Activated CD8-positive, alpha-beta memory T cell treated with anti-CD3 and anti-CD28 coated beads, Interleukin-2, amount 10 ng/mL, durations not matched to agents 7 days and 5 days (primary cell): ENCODE measurements at regions of chr12 and their contacts with region 1.

Region 1: DNA sequence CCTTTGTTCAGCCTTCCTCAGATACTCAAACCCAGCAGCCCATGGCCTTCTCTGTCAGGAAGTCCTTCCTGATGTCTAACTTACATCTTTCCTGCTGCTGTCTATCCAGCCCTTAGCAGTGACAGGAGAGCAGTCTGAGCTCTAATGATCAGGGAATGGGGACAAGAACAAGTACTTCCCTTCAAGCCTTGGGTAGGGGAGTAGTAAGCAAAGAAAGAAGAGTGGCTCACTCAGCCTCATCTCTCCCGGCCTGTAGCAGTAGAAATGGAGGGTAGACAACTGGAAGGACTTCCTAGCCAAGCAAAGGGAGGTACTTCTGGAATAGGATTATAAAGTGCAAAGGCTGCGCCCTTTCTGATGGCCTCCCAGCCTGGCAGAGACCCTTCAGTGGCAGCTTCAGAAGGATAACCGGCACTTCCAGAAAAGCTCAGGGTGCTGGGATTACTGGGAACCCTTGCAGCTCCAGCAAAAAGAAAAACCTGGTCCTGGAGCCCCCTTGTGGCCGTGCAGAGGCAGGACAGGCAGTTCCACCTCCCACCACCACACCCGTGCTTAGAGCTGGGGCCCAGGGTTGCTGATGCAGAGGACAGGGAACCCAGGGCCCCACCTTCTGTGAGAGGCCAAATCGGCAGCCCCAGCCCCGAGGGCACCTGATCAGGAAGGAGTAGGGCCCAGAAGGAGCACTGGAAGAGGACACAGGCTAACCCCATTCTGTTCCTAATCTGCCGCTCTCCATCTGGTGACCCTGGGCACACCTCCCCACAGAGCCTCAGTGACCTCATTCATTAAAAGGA is 12.4 kb upstream of the SMUG1 start:
- DNase-seq: peak; percentile 69
- ATAC-seq: peak; percentile 89
- H3K4me3 Mint-ChIP-seq: no peak overlapping the region
- H3K27ac Mint-ChIP-seq: no peak overlapping the region
- H3K4me1 Mint-ChIP-seq: no peaks in the 10 kb centered on the region
- H3K27me3 Mint-ChIP-seq: peaks cover 62% of the 10 kb centered on the region

Region 2: DNA sequence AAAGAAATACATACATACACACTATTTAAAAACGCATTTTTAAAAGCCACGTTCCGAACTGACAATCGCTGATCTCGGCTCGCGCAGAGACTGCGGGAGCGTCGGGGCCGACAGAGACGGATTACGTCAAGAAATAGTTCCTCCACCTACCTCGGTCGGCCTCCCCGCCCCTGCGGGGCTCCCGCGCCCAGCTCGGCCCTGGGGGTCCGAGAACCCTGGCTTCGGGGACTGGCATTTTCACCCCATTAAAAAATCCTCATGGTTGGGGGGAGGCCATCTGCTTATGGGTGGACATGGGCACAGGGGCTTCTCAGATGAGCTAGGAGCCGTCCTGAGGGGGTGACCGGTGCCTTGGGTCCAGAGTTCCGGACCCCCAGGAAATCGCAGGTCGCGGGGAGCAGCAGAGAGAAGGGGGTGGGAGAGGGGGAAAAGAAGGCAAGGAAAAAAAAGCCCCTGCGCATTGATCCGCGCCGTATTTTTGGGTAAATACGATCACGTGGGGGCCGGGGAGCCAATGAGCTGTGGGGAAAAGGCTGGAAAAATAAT is 201.6 kb before region 1 on chr12:
- CTCF ChIA-PET with region 1: interaction called, 94 read pairs
- DNase-seq: no peak
- ATAC-seq: no peak
- H3K4me3 Mint-ChIP-seq: peak overlapping the region; percentile 42
- H3K27ac Mint-ChIP-seq: no peak overlapping the region
- H3K4me1 Mint-ChIP-seq: peaks cover 14% of the 10 kb centered on the region
- H3K27me3 Mint-ChIP-seq: peaks cover 97% of the 10 kb centered on the region

Region 3: GRCh38 chr12:54017878-54018467 is 183.2 kb before region 1 on chr12:
- CTCF ChIA-PET with region 1: interaction called, 158 read pairs
- DNase-seq: peak; percentile 87
- ATAC-seq: peak; percentile 96
- H3K4me3 Mint-ChIP-seq: peak overlapping the region; percentile 74
- H3K27ac Mint-ChIP-seq: peak overlapping the region; percentile 58
- H3K4me1 Mint-ChIP-seq: peaks cover 15% of the 10 kb centered on the region
- H3K27me3 Mint-ChIP-seq: peaks cover 81% of the 10 kb centered on the region

Region 4: DNA sequence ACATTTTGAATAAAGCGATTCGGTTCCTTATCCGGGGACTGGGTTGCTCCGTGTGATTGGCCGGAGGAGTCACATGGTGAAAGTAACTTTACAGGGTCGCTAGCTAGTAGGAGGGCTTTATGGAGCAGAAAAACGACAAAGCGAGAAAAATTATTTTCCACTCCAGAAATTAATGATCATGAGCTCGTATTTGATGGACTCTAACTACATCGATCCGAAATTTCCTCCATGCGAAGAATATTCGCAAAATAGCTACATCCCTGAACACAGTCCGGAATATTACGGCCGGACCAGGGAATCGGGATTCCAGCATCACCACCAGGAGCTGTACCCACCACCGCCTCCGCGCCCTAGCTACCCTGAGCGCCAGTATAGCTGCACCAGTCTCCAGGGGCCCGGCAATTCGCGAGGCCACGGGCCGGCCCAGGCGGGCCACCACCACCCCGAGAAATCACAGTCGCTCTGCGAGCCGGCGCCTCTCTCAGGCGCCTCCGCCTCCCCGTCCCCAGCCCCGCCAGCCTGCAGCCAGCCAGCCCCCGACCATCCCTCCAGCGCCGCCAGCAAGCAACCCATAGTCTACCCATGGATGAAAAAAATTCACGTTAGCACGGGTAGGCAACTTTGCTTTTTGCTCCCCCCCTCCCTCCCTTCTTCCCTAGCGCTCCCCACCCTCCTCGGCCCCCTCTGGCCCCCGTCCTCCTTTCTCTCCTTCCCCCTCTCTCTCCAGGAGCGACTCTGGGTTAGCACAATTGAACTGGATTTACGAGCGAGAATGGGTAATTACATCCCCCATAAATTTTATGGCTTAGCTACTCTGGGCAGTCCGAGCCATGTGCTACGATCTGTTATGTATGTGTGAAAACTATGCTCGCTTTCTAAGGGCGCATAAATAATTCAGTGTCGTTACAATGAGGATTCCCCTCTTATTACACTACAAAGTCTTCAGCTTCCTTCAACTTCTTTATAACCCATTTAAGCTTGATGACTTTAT is 147.2 kb before region 1 on chr12 and contains the start of gene HOXC4:
- CTCF ChIA-PET with region 1: interaction called, 13 read pairs
- DNase-seq: peak; percentile 62
- ATAC-seq: peak; percentile 80
- H3K4me3 Mint-ChIP-seq: peak within 1 kb of the TSS; percentile 75
- H3K27ac Mint-ChIP-seq: peak within 1 kb of the TSS; percentile 79
- H3K4me1 Mint-ChIP-seq: peaks cover 30% of the 10 kb centered on the region
- H3K27me3 Mint-ChIP-seq: peaks cover 88% of the 10 kb centered on the region
- total RNA-seq, gene HOXC4: 1.5 to 1.9 TPM

Region 5: GRCh38 chr12:54147186-54147585 is 54.0 kb before region 1 on chr12:
- CTCF ChIA-PET with region 1: no interaction called
- DNase-seq: no peak
- ATAC-seq: no peak
- H3K4me3 Mint-ChIP-seq: no peak overlapping the region
- H3K27ac Mint-ChIP-seq: no peak overlapping the region
- H3K4me1 Mint-ChIP-seq: no peaks in the 10 kb centered on the region
- H3K27me3 Mint-ChIP-seq: peaks cover 48% of the 10 kb centered on the region

Region 6: DNA sequence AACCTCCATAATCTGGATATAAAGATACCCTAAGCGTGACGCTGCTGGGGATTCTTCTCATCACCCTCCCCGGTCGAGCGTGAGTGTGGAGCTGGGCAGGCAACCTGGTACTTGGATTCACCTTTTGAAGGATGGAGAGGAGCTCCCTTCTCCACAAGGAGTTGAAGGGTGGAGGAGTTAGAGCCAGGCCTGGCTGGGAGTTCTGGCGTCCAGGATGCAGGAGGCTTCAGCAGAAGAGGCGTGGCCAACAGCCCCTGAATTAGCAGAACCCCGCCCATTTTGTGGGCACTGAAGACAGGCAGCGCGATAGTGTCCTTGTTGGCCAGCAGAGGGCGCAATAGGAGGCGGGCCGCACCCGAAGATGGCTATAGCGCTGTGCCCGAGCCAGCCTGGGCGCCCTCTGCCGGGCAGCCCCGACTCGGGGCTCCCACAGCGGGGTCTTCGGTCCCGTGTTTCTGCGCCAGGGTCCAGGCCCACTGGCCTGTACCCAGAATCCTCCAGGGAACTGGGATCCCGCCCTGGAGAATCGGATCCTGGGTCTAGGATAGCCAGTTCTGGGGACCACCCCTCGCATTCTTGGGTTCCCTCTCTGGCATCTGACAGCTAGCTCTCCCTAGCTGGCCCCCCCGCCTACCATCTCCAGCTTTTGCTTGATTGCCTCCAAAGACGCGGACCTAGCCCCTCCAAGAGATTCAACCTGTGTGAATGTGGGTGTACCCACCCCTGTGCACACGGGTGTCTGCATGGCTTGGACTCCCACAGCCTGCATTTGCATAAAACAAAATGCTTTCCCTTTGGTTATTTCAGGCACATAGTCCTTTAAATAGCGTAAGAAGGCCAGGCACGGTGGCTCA is 13.6 kb after region 1 on chr12:
- CTCF ChIA-PET with region 1: interaction called, 87 read pairs
- DNase-seq: peak; percentile 95
- ATAC-seq: peak; percentile 90
- H3K4me3 Mint-ChIP-seq: peak overlapping the region; percentile 61
- H3K27ac Mint-ChIP-seq: peak overlapping the region; percentile 18
- H3K4me1 Mint-ChIP-seq: peaks cover 36% of the 10 kb centered on the region
- H3K27me3 Mint-ChIP-seq: peaks cover 7% of the 10 kb centered on the region